ENCODE measurements at regions of chr11 and their contacts with region 1.

Region 1: GRCh38 chr11:111319296-111319695 is 20.9 kb downstream of the POU2AF3 start:
- DNase-seq: no peak
- H3K4me3 ChIP-seq: no peak overlapping the region
- H3K27ac ChIP-seq: no peak overlapping the region
- H3K4me1 ChIP-seq: no peaks in the 10 kb centered on the region
- H3K27me3 ChIP-seq: no peaks in the 10 kb centered on the region
- CTCF ChIP-seq: no peak
- POLR2A ChIP-seq: no peak

Region 2: DNA sequence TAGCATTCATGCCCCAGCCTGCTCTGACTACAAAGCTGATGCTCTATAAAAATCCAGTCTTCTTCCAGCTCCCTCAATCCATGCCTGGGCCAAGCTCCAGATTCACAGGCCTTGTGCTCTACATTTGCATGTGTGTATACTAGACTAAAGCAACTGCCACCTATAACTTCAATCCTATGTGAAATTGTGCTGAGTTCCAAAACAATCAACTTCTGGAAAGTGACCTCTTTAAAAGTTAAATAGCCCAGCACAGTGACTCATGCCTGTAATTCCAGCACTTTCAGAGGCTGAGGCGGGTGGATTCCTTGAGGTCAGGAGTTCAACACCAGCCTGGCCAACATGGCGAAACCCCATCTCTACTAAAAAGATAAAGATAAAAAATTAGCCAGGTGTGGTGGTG is 1340.4 kb before region 1 on chr11:
- CTCF ChIA-PET with region 1: no interaction called
- POLR2A ChIA-PET with region 1: no interaction called
- dilution Hi-C with region 1: no loop called
- intact Hi-C with region 1: loop called (anchors 5 kb)
- DNase-seq: peak; percentile 60
- H3K4me3 ChIP-seq: no peak overlapping the region
- H3K27ac ChIP-seq: no peak overlapping the region
- H3K4me1 ChIP-seq: no peaks in the 10 kb centered on the region
- H3K27me3 ChIP-seq: no peaks in the 10 kb centered on the region
- CTCF ChIP-seq: no peak
- POLR2A ChIP-seq: no peak

Region 3: DNA sequence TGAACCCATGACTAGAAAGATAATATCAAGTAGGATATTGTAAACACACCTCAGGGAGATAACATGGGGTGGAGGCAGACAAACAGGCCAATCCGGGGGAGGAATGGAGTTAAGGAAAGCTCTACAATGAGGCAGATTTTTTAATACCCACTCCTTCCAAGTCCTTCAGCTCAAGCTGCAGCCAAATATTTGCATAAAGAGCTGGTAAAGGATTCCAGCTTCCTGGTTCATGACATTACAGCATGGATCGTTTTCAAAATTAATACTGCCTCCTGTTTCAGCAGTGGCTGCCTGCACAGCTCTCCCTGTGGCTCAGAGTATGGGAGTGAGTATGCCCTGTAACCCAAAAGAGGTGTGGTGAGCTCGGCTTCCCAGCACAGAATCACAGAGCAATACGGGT is 15.8 kb before region 1 on chr11:
- CTCF ChIA-PET with region 1: no interaction called
- POLR2A ChIA-PET with region 1: no interaction called
- dilution Hi-C with region 1: no loop called
- intact Hi-C with region 1: no loop called
- DNase-seq: no peak
- H3K4me3 ChIP-seq: no peak overlapping the region
- H3K27ac ChIP-seq: no peak overlapping the region
- H3K4me1 ChIP-seq: no peaks in the 10 kb centered on the region
- H3K27me3 ChIP-seq: peaks cover 26 to 50% of the 10 kb centered on the region in 2 experiments
- CTCF ChIP-seq: no peak
- POLR2A ChIP-seq: no peak

Region 4: GRCh38 chr11:111494040-111494439 is 174.7 kb after region 1 on chr11:
- CTCF ChIA-PET with region 1: no interaction called
- POLR2A ChIA-PET with region 1: no interaction called
- dilution Hi-C with region 1: no loop called
- intact Hi-C with region 1: no loop called
- DNase-seq: no peak
- H3K4me3 ChIP-seq: no peak overlapping the region
- H3K27ac ChIP-seq: no peak overlapping the region
- H3K4me1 ChIP-seq: no peaks in the 10 kb centered on the region
- H3K27me3 ChIP-seq: peaks cover 0 to 3% of the 10 kb centered on the region in 2 experiments
- CTCF ChIP-seq: no peak
- POLR2A ChIP-seq: no peak